HEK293 (cell line): ENCODE measurements at regions of chr6 and their contacts with region 1.

Region 1: GRCh38 chr6:150016324-150017185 is 8.8 kb downstream of the RAET1L start:
- H3K4me3 ChIP-seq: no peak overlapping the region
- H3K27ac ChIP-seq: no peak overlapping the region
- H3K4me1 ChIP-seq: no peaks in the 10 kb centered on the region
- CTCF ChIP-seq: peak; percentile 69; the same call in 1 of the 2 replicates

Region 2: GRCh38 chr6:149925974-149926777 is 90.4 kb before region 1 on chr6:
- CTCF ChIA-PET with region 1: interaction called, 14 read pairs
- POLR2A ChIA-PET with region 1: no interaction called
- H3K4me3 ChIP-seq: peak overlapping the region; percentile 38
- H3K27ac ChIP-seq: no peak overlapping the region
- H3K4me1 ChIP-seq: no peaks in the 10 kb centered on the region
- CTCF ChIP-seq: peak; percentile 86

Region 3: GRCh38 chr6:149934249-149935156 is 82.1 kb before region 1 on chr6:
- CTCF ChIA-PET with region 1: interaction called, 35 read pairs
- POLR2A ChIA-PET with region 1: interaction called, 3 read pairs
- H3K4me3 ChIP-seq: no peak overlapping the region
- H3K27ac ChIP-seq: no peak overlapping the region
- H3K4me1 ChIP-seq: no peaks in the 10 kb centered on the region
- CTCF ChIP-seq: peak; percentile 51; the same call in 1 of the 2 replicates